ENCODE measurements at regions of chr9 and their contacts with region 1.

Region 1: GRCh38 chr9:25003686-25004085 is 458.0 kb upstream of the IZUMO3 start:
- DNase-seq: peak in 1 of 2 experiments; percentile 1
- H3K4me3 ChIP-seq: no peak overlapping the region
- H3K4me3 Mint-ChIP-seq: no peak overlapping the region
- H3K27ac Mint-ChIP-seq: no peak overlapping the region
- H3K4me1 ChIP-seq: no peaks in the 10 kb centered on the region
- H3K4me1 Mint-ChIP-seq: no peaks in the 10 kb centered on the region
- H3K27me3 ChIP-seq: no peaks in the 10 kb centered on the region
- H3K27me3 Mint-ChIP-seq: no peaks in the 10 kb centered on the region
- CTCF ChIP-seq: no peak

Region 2: DNA sequence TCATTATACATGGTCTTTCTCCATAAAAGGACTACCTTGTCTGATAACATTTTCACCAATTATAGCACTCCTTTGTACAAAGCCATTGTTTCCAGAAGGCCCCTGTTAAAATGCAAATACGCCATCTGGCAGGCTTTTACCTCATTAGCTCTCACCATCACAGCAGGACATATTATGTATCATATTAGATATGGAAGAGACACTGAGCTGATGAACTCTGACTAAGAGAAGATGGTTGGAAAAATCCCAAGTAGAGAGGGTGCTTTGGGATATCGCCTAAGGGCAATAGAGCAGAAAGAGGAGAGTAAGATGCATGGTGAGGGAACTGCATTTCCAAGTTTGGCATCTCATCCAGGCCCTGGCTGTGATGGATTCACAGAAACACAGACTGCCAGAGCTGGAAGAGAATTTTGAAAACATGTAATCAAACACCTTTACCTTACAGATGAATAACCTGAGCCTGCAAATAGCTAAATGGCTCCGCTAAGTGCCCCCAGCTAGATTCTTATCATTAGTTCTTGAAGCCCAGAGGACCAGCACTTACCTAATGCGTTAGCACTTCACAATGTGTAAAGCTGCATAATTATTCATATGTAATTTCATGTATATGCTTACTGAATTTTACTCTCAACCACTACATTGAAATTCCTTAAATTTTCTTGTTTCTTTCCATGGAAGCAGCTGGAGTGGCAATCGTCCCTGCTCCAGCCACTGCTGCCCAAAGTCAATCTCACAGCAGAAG is 64.4 kb before region 1 on chr9:
- CTCF ChIA-PET with region 1: no interaction called
- POLR2A ChIA-PET with region 1: no interaction called
- intact Hi-C with region 1: loop called (anchors 2 kb)
- DNase-seq: no peak
- H3K4me3 ChIP-seq: no peak overlapping the region
- H3K4me3 Mint-ChIP-seq: no peak overlapping the region
- H3K27ac Mint-ChIP-seq: no peak overlapping the region
- H3K4me1 ChIP-seq: no peaks in the 10 kb centered on the region
- H3K4me1 Mint-ChIP-seq: no peaks in the 10 kb centered on the region
- H3K27me3 ChIP-seq: no peaks in the 10 kb centered on the region
- H3K27me3 Mint-ChIP-seq: no peaks in the 10 kb centered on the region
- CTCF ChIP-seq: no peak

Region 3: GRCh38 chr9:24986331-24986730 is 17.4 kb before region 1 on chr9:
- CTCF ChIA-PET with region 1: no interaction called
- POLR2A ChIA-PET with region 1: no interaction called
- intact Hi-C with region 1: no loop called
- DNase-seq: no peak
- H3K4me3 ChIP-seq: no peak overlapping the region
- H3K4me3 Mint-ChIP-seq: no peak overlapping the region
- H3K27ac Mint-ChIP-seq: no peak overlapping the region
- H3K4me1 ChIP-seq: no peaks in the 10 kb centered on the region
- H3K4me1 Mint-ChIP-seq: no peaks in the 10 kb centered on the region
- H3K27me3 ChIP-seq: no peaks in the 10 kb centered on the region
- H3K27me3 Mint-ChIP-seq: no peaks in the 10 kb centered on the region
- CTCF ChIP-seq: no peak

Measured in Caco-2 (cell line).